H1 (cell line): ENCODE measurements at regions of chr16 and their contacts with region 1.

Region 1: DNA sequence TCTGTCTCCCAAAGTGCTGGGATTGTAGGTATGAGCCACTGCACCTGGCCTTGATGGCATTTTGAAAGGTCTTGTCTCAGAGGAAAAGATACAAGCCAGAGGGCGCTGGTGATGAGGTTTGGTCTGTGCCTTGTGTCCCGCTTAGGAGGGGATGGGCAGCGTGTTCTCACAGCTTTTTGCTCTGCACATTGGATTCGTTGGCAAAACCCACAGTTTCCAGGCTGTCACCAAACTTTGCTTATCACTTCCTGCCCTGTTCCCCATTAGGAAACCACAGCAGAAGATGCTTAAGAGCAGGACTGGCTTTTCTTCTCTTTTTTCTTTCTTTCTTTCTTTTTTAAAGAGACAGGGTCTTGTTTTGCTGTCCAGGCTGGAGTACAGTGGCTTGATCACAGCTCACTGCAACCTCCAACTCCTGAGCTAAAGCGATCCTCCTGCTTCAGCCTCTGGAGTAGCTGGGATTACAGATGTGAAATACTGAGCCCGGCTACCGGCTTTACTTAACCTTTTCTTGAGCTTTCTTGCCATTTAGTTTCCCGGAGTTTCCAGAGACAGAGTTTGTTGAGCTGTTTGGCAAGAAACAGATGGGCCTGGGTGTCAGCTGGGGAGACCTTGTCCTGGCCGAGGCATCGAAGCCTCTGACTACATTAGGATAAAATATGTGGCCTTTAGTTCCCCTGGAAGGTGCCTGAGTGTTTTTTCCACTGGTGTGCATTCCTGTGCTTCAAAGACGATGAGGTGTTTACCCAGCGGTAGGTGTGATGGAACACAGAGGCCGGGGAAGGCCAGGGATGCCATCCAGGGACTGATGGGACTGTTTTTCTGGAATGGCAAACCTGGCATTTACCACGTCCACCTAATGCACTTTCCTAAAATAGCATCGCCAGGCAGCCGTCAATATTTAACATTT is 112.9 kb downstream of the ABCC1 start:
- DNase-seq: no peak
- H3K4me3 ChIP-seq: no peak overlapping the region
- H3K27ac ChIP-seq: no peak overlapping the region
- H3K4me1 ChIP-seq: no peaks in the 10 kb centered on the region
- H3K27me3 ChIP-seq: no peaks in the 10 kb centered on the region
- CTCF ChIP-seq: peak; percentile 16 to 23 (median 23); a peak in 3 of 4 replicates
- EP300 ChIP-seq: no peak
- POLR2A ChIP-seq: no peak
- RAD21 ChIP-seq: peak in 1 of 2 experiments; percentile 25; a peak in 1 of 4 replicates

Region 2: GRCh38 chr16:16051132-16051531 is 11.1 kb before region 1 on chr16:
- CTCF ChIA-PET with region 1: interaction called, 10 read pairs
- POLR2A ChIA-PET with region 1: interaction called, 4 read pairs
- DNase-seq: no peak
- H3K4me3 ChIP-seq: no peak overlapping the region
- H3K27ac ChIP-seq: no peak overlapping the region
- H3K4me1 ChIP-seq: no peaks in the 10 kb centered on the region
- H3K27me3 ChIP-seq: no peaks in the 10 kb centered on the region
- CTCF ChIP-seq: no peak
- EP300 ChIP-seq: no peak
- POLR2A ChIP-seq: no peak
- RAD21 ChIP-seq: no peak

Region 3: GRCh38 chr16:16101561-16101960 is 39.3 kb after region 1 on chr16:
- CTCF ChIA-PET with region 1: no interaction called
- POLR2A ChIA-PET with region 1: no interaction called
- DNase-seq: no peak
- H3K4me3 ChIP-seq: no peak overlapping the region
- H3K27ac ChIP-seq: no peak overlapping the region
- H3K4me1 ChIP-seq: no peaks in the 10 kb centered on the region; a peak in 1 of 7 replicates
- H3K27me3 ChIP-seq: no peaks in the 10 kb centered on the region
- CTCF ChIP-seq: no peak
- EP300 ChIP-seq: no peak
- POLR2A ChIP-seq: no peak
- RAD21 ChIP-seq: no peak